CD8-positive, alpha-beta memory T cell (primary cell): ENCODE measurements at regions of chrX and their contacts with region 1.

Region 1: GRCh38 chrX:153507484-153508178 is 9.8 kb upstream of the ATP2B3 start:
- DNase-seq: peak; percentile 70 to 87 (median 74)
- H3K4me3 ChIP-seq: no peak overlapping the region
- H3K4me3 Mint-ChIP-seq: no peak overlapping the region
- H3K27ac ChIP-seq: no peak overlapping the region
- H3K27ac Mint-ChIP-seq: no peak overlapping the region
- H3K4me1 ChIP-seq: no peaks in the 10 kb centered on the region
- H3K4me1 Mint-ChIP-seq: peaks cover 0 to 6% (median 4%) of the 10 kb centered on the region in 3 donors
- H3K27me3 ChIP-seq: no peaks in the 10 kb centered on the region
- H3K27me3 Mint-ChIP-seq: peaks cover 0 to 10% of the 10 kb centered on the region in 2 donors

Region 2: GRCh38 chrX:152941328-152942106 is 566.1 kb before region 1 on chrX:
- CTCF ChIA-PET with region 1: interaction called, 13 read pairs
- POLR2A ChIA-PET with region 1: no interaction called
- DNase-seq: peak; percentile 82 to 93 (median 89)
- H3K4me3 ChIP-seq: peak overlapping the region; percentile 59
- H3K4me3 Mint-ChIP-seq: peak overlapping the region; percentile 76 to 89 (median 85)
- H3K27ac ChIP-seq: peak overlapping the region; percentile 9
- H3K27ac Mint-ChIP-seq: peak overlapping the region; percentile 64 to 88 (median 84)
- H3K4me1 ChIP-seq: peaks cover 8% of the 10 kb centered on the region
- H3K4me1 Mint-ChIP-seq: peaks cover 6 to 9% (median 9%) of the 10 kb centered on the region in 3 donors
- H3K27me3 ChIP-seq: no peaks in the 10 kb centered on the region
- H3K27me3 Mint-ChIP-seq: peaks cover 0 to 4% of the 10 kb centered on the region in 2 donors

Region 3: GRCh38 chrX:152958524-152959465 is 548.8 kb before region 1 on chrX:
- CTCF ChIA-PET with region 1: interaction called, 19 read pairs
- POLR2A ChIA-PET with region 1: no interaction called
- DNase-seq: peak; percentile 81 to 93 (median 89)
- H3K4me3 ChIP-seq: no peak overlapping the region
- H3K4me3 Mint-ChIP-seq: peak overlapping the region; percentile 70 to 88 (median 79)
- H3K27ac ChIP-seq: peak overlapping the region; percentile 54
- H3K27ac Mint-ChIP-seq: peak overlapping the region; percentile 84 to 96 (median 88)
- H3K4me1 ChIP-seq: peaks cover 4% of the 10 kb centered on the region
- H3K4me1 Mint-ChIP-seq: peaks cover 3 to 17% (median 10%) of the 10 kb centered on the region in 3 donors
- H3K27me3 ChIP-seq: no peaks in the 10 kb centered on the region
- H3K27me3 Mint-ChIP-seq: no peaks in the 10 kb centered on the region

Region 4: GRCh38 chrX:153032397-153033118 is 475.1 kb before region 1 on chrX:
- CTCF ChIA-PET with region 1: interaction called, 30 read pairs
- POLR2A ChIA-PET with region 1: no interaction called
- DNase-seq: peak; percentile 39 to 67 (median 48)
- H3K4me3 ChIP-seq: peak overlapping the region; percentile 37
- H3K4me3 Mint-ChIP-seq: peak overlapping the region; percentile 80 to 92 (median 89)
- H3K27ac ChIP-seq: no peak overlapping the region
- H3K27ac Mint-ChIP-seq: peak overlapping the region; percentile 75 to 93 (median 87)
- H3K4me1 ChIP-seq: peaks cover 7% of the 10 kb centered on the region
- H3K4me1 Mint-ChIP-seq: peaks cover 6 to 27% (median 6%) of the 10 kb centered on the region in 3 donors
- H3K27me3 ChIP-seq: no peaks in the 10 kb centered on the region
- H3K27me3 Mint-ChIP-seq: peaks cover 0 to 4% of the 10 kb centered on the region in 2 donors

Region 5: DNA sequence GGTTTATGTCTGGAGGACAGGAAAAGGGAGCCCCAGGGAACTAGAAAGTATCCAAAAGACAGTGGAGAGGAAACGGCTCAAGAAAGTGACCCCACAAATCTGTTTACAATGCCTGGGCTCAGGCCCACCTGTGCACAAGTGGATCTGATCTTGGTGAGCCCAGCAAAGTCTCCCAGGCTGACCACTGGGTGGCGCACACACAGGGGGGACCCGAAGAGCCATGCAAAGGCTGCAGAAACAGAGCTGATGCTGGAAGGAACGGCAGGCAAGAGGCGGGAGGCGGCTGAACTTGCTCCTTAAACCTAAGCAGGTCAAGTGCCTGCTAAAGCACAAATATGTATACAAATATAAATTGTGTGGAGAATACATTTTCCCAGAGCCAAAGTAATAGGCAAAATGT is 46.8 kb before region 1 on chrX:
- CTCF ChIA-PET with region 1: interaction called, 16 read pairs
- POLR2A ChIA-PET with region 1: no interaction called
- DNase-seq: peak; percentile 6 to 57 (median 25)
- H3K4me3 ChIP-seq: no peak overlapping the region
- H3K4me3 Mint-ChIP-seq: no peak overlapping the region
- H3K27ac ChIP-seq: no peak overlapping the region
- H3K27ac Mint-ChIP-seq: no peak overlapping the region
- H3K4me1 ChIP-seq: no peaks in the 10 kb centered on the region
- H3K4me1 Mint-ChIP-seq: peaks cover 0 to 4% (median 0%) of the 10 kb centered on the region in 3 donors
- H3K27me3 ChIP-seq: no peaks in the 10 kb centered on the region
- H3K27me3 Mint-ChIP-seq: peaks cover 0 to 3% of the 10 kb centered on the region in 2 donors

Region 6: DNA sequence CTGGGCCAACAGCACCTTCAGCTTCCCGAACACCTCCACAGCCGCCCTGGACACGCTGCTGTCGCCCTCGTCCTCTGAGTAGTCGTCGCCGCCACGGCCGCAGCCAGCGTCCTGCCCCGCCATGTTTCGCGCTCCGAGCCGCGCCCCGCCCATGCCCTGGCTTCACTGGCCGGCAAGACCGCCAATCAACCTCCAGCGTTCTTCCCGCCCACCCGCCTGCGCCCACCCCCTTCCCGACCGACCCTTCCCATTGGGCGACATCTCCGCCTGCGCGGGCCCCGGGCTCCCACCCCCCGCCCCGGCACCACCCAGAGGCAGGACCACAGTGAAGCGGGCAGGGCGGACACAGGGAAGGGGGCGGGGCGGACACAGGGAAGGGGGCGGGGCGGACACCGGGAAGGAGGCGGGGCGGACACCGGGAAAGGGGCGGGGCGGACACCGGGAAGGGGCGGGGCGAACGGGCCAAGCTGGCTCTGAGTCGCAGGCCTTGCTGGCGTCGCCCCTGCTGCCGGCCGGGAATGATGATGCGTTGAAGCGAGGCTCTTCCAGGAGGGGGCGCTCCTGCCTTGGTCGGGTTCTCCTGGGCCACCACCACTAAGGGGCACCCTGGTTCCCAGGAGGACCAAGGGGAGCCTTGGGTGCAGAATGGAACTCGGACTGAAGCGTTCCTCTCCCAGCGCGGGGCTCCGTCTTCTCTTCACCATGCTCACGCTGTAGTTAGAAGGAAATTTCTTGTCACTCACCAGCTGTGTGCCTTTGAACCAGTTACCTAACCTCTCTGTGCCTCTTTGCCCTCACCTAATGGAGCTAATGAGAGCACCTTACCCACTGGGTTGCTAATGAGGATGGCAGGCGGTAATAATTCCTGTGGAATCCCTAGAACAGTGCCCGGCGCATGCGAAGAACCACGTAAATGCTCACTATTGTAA is 36.9 kb before region 1 on chrX and contains the start of gene HAUS7:
- CTCF ChIA-PET with region 1: interaction called, 31 read pairs
- POLR2A ChIA-PET with region 1: no interaction called
- DNase-seq: peak; percentile 81 to 91 (median 83)
- H3K4me3 ChIP-seq: peak within 1 kb of the TSS; percentile 80
- H3K4me3 Mint-ChIP-seq: peak within 1 kb of the TSS; percentile 79 to 92 (median 82)
- H3K27ac ChIP-seq: peak within 1 kb of the TSS; percentile 59
- H3K27ac Mint-ChIP-seq: peak within 1 kb of the TSS; percentile 45 to 91 (median 76)
- H3K4me1 ChIP-seq: peaks cover 16% of the 10 kb centered on the region
- H3K4me1 Mint-ChIP-seq: peaks cover 5 to 27% (median 19%) of the 10 kb centered on the region in 3 donors
- H3K27me3 ChIP-seq: no peaks in the 10 kb centered on the region
- H3K27me3 Mint-ChIP-seq: peaks cover 0 to 1% of the 10 kb centered on the region in 2 donors
- total RNA-seq, gene HAUS7: 70.2 to 73.8 TPM

Region 7: GRCh38 chrX:153491351-153491914 is 16.2 kb before region 1 on chrX:
- CTCF ChIA-PET with region 1: interaction called, 13 read pairs
- POLR2A ChIA-PET with region 1: no interaction called
- DNase-seq: no peak
- H3K4me3 ChIP-seq: no peak overlapping the region
- H3K4me3 Mint-ChIP-seq: no peak overlapping the region
- H3K27ac ChIP-seq: no peak overlapping the region
- H3K27ac Mint-ChIP-seq: peak overlapping the region in 1 of 8 donors; percentile 90
- H3K4me1 ChIP-seq: no peaks in the 10 kb centered on the region
- H3K4me1 Mint-ChIP-seq: peaks cover 0 to 3% (median 0%) of the 10 kb centered on the region in 3 donors
- H3K27me3 ChIP-seq: no peaks in the 10 kb centered on the region
- H3K27me3 Mint-ChIP-seq: peaks cover 0 to 3% of the 10 kb centered on the region in 2 donors

Region 8: GRCh38 chrX:153530411-153531129 is 22.9 kb after region 1 on chrX:
- CTCF ChIA-PET with region 1: no interaction called
- POLR2A ChIA-PET with region 1: no interaction called
- DNase-seq: no peak
- H3K4me3 ChIP-seq: no peak overlapping the region
- H3K4me3 Mint-ChIP-seq: no peak overlapping the region
- H3K27ac ChIP-seq: no peak overlapping the region
- H3K27ac Mint-ChIP-seq: no peak overlapping the region
- H3K4me1 ChIP-seq: no peaks in the 10 kb centered on the region
- H3K4me1 Mint-ChIP-seq: no peaks in the 10 kb centered on the region
- H3K27me3 ChIP-seq: no peaks in the 10 kb centered on the region
- H3K27me3 Mint-ChIP-seq: peaks cover 4 to 13% of the 10 kb centered on the region in 2 donors